Upper lobe of right lung (tissue), 1 donor: ENCODE measurements at regions of chr12 and their contacts with region 1.

Region 1: GRCh38 chr12:122951979-122952892 is 14.0 kb downstream of the ABCB9 start:
- DNase-seq: peak; percentile 83
- ATAC-seq: peak; percentile 95
- H3K4me3 ChIP-seq: no peak overlapping the region
- H3K27ac ChIP-seq: no peak overlapping the region
- H3K4me1 ChIP-seq: peaks cover 2% of the 10 kb centered on the region
- H3K27me3 ChIP-seq: no peaks in the 10 kb centered on the region
- CTCF ChIP-seq: peak; percentile 91

Region 2: DNA sequence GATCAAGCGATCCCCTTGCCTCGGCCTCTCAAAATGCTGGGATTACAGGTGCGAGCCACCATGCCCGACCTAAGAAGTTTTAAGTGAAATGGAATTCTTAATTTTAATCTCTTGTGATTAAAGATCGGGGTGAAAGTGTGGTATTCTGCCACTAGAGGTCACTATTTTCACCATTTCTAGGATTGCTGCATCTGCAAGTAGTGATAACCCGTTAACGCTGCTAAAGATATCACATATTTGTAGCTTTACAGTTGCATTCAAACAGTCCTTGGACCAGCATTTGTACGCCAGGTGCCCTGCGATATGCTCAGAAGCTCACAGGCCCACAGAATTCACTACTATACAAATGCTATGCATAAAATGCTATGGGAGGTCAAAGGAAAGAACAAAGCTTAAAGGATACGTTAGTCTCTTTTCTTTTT is 158.5 kb before region 1 on chr12:
- intact Hi-C with region 1: loop called (anchors 10 kb)
- DNase-seq: no peak
- ATAC-seq: peak; percentile 83
- H3K4me3 ChIP-seq: no peak overlapping the region
- H3K27ac ChIP-seq: no peak overlapping the region
- H3K4me1 ChIP-seq: no peaks in the 10 kb centered on the region
- H3K27me3 ChIP-seq: no peaks in the 10 kb centered on the region
- CTCF ChIP-seq: peak; percentile 74

Region 3: DNA sequence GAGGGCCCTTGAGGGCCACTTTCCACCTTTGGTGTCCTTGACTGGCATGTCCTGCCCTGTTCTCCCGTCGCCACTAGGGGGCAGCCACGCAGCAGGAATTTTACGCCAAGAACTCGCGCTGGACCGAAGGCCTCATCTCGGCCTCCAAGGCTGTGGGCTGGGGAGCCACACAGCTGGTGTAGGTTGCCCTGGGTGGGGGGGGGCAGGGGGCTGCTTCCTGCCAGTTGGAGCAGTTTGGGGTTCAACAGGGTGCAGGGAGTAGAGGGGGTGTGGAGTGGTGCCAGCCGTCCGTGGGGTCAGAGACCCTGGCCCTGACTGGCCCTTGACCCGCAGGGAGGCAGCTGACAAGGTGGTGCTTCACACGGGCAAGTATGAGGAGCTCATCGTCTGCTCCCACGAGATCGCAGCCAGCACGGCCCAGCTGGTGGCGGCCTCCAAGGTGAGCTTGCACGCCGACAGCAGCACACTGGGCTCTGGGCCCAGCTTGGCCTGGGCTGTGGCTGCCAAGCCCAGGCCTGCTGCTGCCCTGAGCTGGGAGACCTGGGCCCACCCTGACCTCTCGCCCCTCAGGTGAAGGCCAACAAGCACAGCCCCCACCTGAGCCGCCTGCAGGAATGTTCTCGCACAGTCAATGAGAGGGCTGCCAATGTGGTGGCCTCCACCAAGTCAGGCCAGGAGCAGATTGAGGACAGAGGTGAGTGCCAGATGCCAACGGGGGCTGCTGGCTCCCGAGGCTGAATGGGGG is 91.7 kb before region 1 on chr12:
- intact Hi-C with region 1: loop called (anchors 2 kb)
- DNase-seq: peak; percentile 92
- ATAC-seq: peak; percentile 71
- H3K4me3 ChIP-seq: no peak overlapping the region
- H3K27ac ChIP-seq: no peak overlapping the region
- H3K4me1 ChIP-seq: peaks cover 16% of the 10 kb centered on the region
- H3K27me3 ChIP-seq: no peaks in the 10 kb centered on the region
- CTCF ChIP-seq: peak; percentile 84

Region 4: DNA sequence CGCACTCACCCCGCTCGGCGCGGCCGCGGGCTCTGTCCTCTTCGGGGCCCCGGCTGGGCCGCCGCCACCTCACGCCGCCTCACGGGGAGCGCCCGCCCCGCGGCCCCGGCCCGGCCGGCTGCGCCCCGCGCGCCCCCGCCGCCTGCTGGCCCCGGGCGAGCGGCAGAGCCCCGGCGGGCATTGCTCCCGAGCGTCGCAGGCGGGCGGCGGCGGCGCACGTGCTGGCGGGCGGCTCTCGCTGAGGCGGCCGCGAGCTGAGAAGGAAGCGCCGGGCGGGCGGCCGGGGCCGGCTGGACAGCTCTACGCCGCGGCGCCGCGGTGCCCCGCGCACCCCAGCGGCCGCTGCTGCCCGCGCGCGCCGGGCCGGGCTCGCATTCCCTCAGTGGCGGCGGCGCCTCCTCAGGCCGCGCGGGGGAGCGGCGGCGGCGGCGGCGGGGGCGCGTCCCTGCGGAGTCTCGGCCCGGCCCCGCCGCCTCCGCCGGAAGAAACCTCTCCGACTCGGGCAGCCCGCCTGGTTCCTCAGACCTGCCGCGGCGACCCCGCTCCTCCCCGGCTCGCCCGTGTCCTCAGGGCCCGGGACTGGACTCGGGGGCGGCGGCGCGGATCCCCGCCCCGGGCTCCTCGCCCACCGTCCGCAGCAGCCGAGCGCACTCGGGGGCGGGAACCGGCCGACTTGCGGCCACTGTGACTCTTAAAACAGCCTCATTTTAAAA is 198.7 kb after region 1 on chr12 and contains the start of gene PITPNM2:
- intact Hi-C with region 1: no loop called
- DNase-seq: peak; percentile 85
- ATAC-seq: peak; percentile 90
- H3K4me3 ChIP-seq: peak within 1 kb of the TSS; percentile 75
- H3K27ac ChIP-seq: peak within 1 kb of the TSS; percentile 83
- H3K4me1 ChIP-seq: peaks cover 27% of the 10 kb centered on the region
- H3K27me3 ChIP-seq: no peaks in the 10 kb centered on the region
- CTCF ChIP-seq: no peak
- total RNA-seq, gene PITPNM2: 25.9 TPM